Posterior cingulate gyrus (tissue), 11 donors: ENCODE measurements at regions of chr15 and their contacts with region 1.

Region 1: GRCh38 chr15:46918462-46919135 is 798.7 kb upstream of the SEMA6D start:
- DNase-seq: peak in 2 of 10 donors; percentile 43 to 70

Region 2: DNA sequence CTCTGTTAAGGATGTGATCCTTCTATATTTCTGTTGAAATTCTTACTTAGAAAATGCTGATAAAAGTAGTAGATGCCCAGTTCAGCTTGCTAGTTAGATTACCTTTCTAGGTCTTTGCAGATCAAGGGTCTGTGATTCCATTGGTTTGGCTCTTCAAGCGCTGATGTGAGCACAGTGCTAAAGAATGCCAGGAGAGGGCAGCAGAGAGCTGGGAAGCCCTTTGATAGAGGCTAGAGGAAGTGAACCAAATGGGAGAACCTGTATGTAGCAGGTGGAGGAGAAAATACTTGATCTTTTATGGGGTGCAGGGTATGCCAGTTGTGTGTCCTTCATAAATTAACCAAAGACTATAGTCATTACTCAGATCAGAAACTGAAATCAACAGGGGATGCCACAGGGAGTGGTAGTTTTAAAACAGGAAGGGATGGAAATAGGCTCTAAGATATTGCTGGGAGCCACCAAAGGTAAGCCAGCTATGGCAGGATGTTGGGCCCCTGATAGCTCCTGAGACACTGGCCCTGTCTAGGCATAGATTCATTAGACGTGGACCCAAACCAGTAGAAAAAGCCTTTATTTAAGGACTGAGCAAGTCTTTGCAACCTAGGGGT is 606.4 kb before region 1 on chr15:
- intact Hi-C with region 1: loop called (anchors 5 kb)
- DNase-seq: peak; percentile 47 to 95 (median 78)

Region 3: GRCh38 chr15:46489276-46489675 is 429.3 kb before region 1 on chr15:
- intact Hi-C with region 1: no loop called
- DNase-seq: no peak

Region 4: DNA sequence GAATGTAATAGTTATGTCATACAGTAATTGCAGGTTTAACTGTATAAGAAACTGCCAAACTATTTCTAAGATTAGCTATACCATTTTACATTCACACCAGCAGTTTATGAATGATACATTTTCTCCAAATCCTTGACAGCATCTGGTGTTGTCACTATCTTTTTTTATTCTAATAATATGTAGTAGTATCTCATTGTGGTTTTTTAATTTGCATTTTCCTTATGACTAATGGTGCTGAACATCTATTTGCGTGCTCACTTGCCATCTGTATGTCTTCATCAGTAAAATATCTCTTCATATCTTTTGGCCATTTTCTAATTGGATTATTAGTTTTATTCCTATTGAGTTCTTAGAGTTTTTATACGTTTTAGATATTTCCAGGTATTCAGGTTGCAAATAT is 195.3 kb before region 1 on chr15:
- intact Hi-C with region 1: no loop called
- DNase-seq: no peak

Region 5: GRCh38 chr15:46901001-46901400 is 17.6 kb before region 1 on chr15:
- intact Hi-C with region 1: no loop called
- DNase-seq: no peak